SK-N-SH (cell line): ENCODE measurements at regions of chr19 and their contacts with region 1.

Region 1: DNA sequence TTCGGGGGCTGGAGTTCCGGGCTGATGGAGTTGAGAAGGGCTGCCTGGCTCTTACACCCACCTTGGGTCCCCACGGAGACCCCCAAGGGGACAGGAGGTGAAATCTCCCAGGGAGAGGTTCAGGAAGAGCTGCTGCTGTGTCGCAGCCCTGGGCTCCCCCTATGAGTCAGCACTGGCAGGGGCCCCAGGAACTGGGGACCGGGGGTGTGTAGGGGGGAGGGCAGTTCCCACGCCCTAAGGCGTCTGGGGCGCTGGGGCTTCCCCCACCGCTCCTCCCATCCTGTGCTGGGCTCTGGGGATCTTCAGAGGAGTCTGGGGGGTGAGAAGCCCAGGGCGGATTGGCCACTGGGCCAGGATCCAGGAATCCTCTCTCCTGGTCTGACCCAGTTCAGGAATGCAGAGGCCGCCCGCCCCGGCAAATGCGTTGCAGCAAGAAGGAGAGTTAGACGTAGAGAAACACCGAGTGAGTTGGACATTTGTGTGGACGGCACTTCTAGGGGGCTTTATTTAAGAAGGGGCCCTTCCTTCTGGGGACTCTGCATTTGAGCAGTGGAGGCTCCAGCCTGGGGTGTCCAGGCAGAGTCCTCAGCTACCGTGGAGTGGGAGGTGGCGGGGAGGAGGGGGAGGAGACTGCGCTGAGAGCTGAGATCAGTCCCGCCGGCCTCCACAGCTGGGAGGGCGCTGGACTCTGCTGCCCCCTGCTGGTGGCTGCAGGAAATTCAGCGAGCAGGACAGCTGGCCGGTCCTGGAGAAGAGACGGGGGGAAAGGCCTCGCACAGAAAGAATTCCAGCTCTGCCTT is 15.0 kb upstream of the NANOS3 start:
- DNase-seq: peak; percentile 94
- H3K4me3 ChIP-seq: peak overlapping the region; percentile 39 to 61
- H3K27ac ChIP-seq: peak overlapping the region; percentile 82 to 98
- H3K4me1 ChIP-seq: peaks cover 9 to 20% of the 10 kb centered on the region in 2 experiments; a peak in 3 of 4 replicates
- H3K27me3 ChIP-seq: no peaks in the 10 kb centered on the region
- CTCF ChIP-seq: peak; percentile 91
- EP300 ChIP-seq: peak; percentile 14 to 69; a peak in 2 of 4 replicates
- RAD21 ChIP-seq: peak; percentile 95

Region 2: DNA sequence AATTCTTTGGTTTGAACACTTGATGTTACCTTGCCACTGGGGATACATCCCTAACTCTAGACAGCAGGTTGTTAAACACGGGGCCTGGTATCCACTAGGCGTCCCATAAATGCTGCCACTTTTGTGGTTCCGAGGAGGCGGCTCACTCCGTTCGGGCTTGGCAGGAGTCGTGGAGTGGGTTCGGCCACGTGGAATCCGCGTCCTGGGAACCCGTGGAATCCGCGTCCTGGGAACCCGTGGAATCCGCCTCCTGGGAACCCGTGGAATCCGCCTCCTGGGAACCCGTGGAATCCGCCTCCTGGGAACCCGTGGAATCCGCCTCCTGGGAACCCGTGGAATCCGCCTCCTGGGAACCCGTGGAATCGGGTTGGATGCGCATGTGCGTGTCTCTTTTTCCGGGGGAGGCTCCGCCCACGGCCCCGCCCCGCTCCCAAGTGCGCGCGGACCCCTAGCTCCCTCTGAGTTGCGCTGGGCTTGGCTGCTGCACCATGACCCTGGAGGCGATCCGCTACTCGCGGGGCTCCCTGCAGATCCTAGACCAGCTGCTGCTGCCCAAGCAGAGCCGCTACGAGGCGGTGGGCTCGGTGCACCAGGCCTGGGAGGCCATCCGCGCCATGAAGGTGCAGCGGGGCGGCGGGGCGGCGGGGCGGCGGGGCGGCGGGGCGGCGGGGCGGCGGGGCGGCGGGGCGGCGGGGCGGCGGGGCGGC is 97.7 kb before region 1 on chr19 and contains the start of gene MRI1:
- CTCF ChIA-PET with region 1: interaction called, 11 read pairs
- POLR2A ChIA-PET with region 1: interaction called, 4 read pairs
- DNase-seq: peak; percentile 97
- H3K4me3 ChIP-seq: peak within 1 kb of the TSS; percentile 63 to 69
- H3K27ac ChIP-seq: peak within 1 kb of the TSS; percentile 42 to 66; a peak in 2 of 4 replicates
- H3K4me1 ChIP-seq: peaks cover 5 to 11% of the 10 kb centered on the region in 2 experiments; a peak in 2 of 4 replicates
- H3K27me3 ChIP-seq: no peaks in the 10 kb centered on the region
- CTCF ChIP-seq: no peak; the same call in 1 of the 2 replicates
- EP300 ChIP-seq: no peak
- RAD21 ChIP-seq: no peak
- polyA plus RNA-seq, gene MRI1: 49.6 and 56.8 TPM in 2 replicates

Region 3: DNA sequence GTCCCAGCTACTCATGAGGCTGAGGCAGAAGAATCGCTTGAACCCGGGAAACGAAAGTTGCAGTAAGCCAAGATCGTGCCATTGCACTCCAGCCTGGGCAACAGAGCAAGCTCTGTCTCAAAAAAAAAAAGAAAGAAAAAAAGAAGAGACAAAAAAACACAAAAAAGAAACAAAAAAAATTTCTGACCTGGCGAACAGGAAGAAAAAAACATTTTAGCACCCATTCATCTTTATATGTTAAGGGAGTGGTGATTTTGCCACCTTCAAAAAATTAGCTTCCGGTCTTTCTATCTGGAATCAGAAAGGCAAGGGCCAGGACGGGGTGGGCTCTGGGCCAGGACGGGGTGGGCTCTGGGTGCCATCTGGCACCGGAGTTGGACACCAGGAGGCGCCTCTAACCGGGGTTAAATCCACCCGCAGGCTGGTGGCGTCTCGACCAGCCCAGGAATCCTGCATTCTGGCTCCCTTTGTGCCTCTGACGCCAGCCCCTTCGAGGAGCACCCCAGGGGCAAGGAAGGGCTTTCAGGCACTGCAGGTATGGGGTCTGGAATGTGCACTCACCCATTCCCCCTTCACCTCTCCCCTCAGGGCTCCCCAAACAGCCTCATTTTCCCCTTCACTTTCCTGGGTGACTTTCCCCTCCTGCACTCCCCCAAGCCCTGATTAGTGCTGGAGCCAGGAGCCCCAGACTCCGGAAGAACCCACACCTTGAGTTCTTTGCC is 77.0 kb before region 1 on chr19:
- CTCF ChIA-PET with region 1: interaction called, 133 read pairs
- POLR2A ChIA-PET with region 1: no interaction called
- DNase-seq: peak; percentile 90
- H3K4me3 ChIP-seq: no peak overlapping the region
- H3K27ac ChIP-seq: peak overlapping the region; percentile 20 to 36; a peak in 2 of 4 replicates
- H3K4me1 ChIP-seq: peaks cover 5 to 30% of the 10 kb centered on the region in 2 experiments; a peak in 3 of 4 replicates
- H3K27me3 ChIP-seq: no peaks in the 10 kb centered on the region
- CTCF ChIP-seq: peak; percentile 74
- EP300 ChIP-seq: no peak
- RAD21 ChIP-seq: peak; percentile 82

Region 4: GRCh38 chr19:13804830-13805683 is 56.9 kb before region 1 on chr19:
- CTCF ChIA-PET with region 1: interaction called, 27 read pairs
- POLR2A ChIA-PET with region 1: no interaction called
- DNase-seq: peak; percentile 72
- H3K4me3 ChIP-seq: no peak overlapping the region
- H3K27ac ChIP-seq: no peak overlapping the region
- H3K4me1 ChIP-seq: no peaks in the 10 kb centered on the region
- H3K27me3 ChIP-seq: no peaks in the 10 kb centered on the region
- CTCF ChIP-seq: peak; percentile 40
- EP300 ChIP-seq: no peak
- RAD21 ChIP-seq: peak; percentile 39

Region 5: DNA sequence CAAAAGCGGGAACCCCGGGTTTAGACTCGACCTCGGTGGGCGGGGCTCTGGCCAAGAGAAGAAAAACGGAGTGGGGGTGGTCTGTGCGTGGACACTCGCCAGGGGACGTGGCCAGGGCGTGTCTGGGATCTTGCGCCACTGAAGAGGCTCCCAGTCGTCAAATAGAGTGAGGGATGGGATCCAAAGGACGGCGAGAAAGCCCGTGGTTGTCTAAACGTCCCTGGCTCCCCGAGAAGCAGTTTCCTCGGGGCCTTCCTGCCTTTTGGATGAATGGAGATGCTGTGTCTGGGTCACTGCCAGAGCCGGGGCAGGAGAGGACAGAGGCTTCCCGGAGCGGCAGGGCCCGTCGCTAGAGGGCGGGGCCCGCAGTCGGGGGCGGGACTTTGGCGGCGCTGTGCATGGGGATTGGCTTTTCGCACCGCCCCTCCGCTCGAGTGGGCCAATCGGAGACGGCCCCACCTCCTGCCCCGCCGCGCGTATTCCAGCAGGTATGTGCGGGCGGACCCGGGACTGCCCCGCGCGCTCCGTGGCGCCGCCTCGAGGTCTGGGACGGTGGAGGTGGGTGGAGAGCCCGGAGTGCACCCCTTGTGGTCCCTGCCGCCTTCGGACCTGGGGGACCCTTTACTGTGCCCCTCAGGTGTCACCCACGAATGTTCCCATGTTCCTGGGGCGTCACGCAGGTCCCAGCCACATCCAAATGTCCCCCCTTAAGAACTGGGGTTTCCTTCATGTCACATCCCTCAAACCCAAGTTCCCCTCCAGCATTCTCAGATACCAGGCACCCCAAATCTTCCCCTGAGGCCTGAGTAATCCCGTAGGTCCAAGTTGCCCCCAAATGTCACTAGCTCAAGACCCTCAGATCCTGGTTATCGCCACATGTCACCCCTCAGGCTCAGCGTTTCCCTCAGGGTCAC is 28.3 kb before region 1 on chr19:
- CTCF ChIA-PET with region 1: interaction called, 61 read pairs
- POLR2A ChIA-PET with region 1: interaction called, 5 read pairs
- DNase-seq: peak; percentile 99
- H3K4me3 ChIP-seq: peak overlapping the region in 1 of 2 experiments; percentile 31; a peak in 1 of 4 replicates
- H3K27ac ChIP-seq: peak overlapping the region; percentile 77 to 97
- H3K4me1 ChIP-seq: peaks cover 36 to 42% of the 10 kb centered on the region in 2 experiments
- H3K27me3 ChIP-seq: no peaks in the 10 kb centered on the region
- CTCF ChIP-seq: peak; percentile 52
- EP300 ChIP-seq: no peak
- RAD21 ChIP-seq: no peak

Region 6: DNA sequence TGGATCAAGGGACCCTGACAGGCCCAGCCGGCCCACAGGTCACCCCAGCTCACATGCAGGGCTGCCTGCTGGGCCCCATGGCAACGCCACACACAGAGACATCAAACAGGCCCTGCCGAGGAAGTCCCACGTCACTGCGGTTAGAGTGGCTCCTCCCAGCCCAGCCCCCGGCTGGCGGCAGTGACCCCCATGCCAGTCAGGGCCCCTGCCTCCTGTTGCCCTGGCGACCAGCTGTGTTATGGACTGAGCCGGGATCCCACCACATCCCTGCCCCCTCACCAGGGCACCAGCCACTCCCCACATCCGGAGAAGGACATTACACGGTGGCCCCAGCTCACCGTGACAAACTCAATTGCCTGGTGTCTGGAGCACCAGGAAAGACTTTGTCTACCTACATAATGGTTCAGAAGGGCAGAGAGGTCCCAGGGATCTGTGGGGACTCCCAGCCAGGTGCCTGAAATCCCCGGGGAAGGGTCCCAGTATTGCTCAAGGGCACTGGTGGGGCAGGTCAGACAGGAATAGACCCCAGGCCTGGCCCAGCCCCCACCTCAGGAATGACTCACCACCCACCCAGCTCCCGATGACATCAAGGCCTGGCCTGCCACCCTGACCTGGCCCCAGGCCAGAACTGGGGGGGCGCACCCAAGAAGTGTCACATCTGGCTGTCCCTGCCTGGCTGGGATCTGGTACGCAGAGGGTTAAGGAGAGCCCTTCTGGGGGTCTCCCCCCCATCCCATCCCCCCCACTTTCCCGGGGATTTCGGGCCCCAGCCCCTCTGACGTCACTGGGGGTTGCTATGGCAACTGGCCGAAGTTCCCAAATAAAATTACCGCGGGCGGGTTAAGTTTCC is 15.2 kb before region 1 on chr19:
- CTCF ChIA-PET with region 1: interaction called, 51 read pairs
- POLR2A ChIA-PET with region 1: interaction called, 8 read pairs
- DNase-seq: peak; percentile 91
- H3K4me3 ChIP-seq: peak overlapping the region; percentile 52 to 65
- H3K27ac ChIP-seq: peak overlapping the region; percentile 100
- H3K4me1 ChIP-seq: peaks cover 40 to 44% of the 10 kb centered on the region in 2 experiments; a peak in 3 of 4 replicates
- H3K27me3 ChIP-seq: no peaks in the 10 kb centered on the region
- CTCF ChIP-seq: no peak
- EP300 ChIP-seq: peak; percentile 23 to 55; a peak in 2 of 4 replicates
- RAD21 ChIP-seq: no peak

Region 7: GRCh38 chr19:13935765-13936510 is 74.0 kb after region 1 on chr19:
- CTCF ChIA-PET with region 1: no interaction called
- POLR2A ChIA-PET with region 1: no interaction called
- DNase-seq: peak; percentile 73
- H3K4me3 ChIP-seq: no peak overlapping the region
- H3K27ac ChIP-seq: peak overlapping the region in 1 of 2 experiments; percentile 43; a peak in 1 of 4 replicates
- H3K4me1 ChIP-seq: peaks cover 0 to 26% of the 10 kb centered on the region in 2 experiments; a peak in 1 of 4 replicates
- H3K27me3 ChIP-seq: no peaks in the 10 kb centered on the region
- CTCF ChIP-seq: no peak
- EP300 ChIP-seq: no peak
- RAD21 ChIP-seq: no peak